CD8-positive, alpha-beta T cell (primary cell): ENCODE measurements at regions of chr6 and their contacts with region 1.

Region 1: GRCh38 chr6:11093589-11094410 is at the start of gene SMIM13:
- DNase-seq: peak; percentile 87 to 96 (median 95)
- ATAC-seq: peak; percentile 92
- H3K4me3 ChIP-seq: peak within 1 kb of the TSS; percentile 85 to 90
- H3K4me3 Mint-ChIP-seq: peak within 1 kb of the TSS; percentile 97
- H3K27ac ChIP-seq: peak within 1 kb of the TSS; percentile 81 to 92
- H3K27ac Mint-ChIP-seq: peak within 1 kb of the TSS; percentile 97
- H3K4me1 ChIP-seq: peaks cover 13% of the 10 kb centered on the region
- H3K4me1 Mint-ChIP-seq: peaks cover 30% of the 10 kb centered on the region
- H3K27me3 ChIP-seq: no peaks in the 10 kb centered on the region
- H3K27me3 Mint-ChIP-seq: no peaks in the 10 kb centered on the region
- CTCF ChIP-seq: peak; percentile 75
- total RNA-seq, gene SMIM13: 4.7 to 5.4 TPM

Region 2: DNA sequence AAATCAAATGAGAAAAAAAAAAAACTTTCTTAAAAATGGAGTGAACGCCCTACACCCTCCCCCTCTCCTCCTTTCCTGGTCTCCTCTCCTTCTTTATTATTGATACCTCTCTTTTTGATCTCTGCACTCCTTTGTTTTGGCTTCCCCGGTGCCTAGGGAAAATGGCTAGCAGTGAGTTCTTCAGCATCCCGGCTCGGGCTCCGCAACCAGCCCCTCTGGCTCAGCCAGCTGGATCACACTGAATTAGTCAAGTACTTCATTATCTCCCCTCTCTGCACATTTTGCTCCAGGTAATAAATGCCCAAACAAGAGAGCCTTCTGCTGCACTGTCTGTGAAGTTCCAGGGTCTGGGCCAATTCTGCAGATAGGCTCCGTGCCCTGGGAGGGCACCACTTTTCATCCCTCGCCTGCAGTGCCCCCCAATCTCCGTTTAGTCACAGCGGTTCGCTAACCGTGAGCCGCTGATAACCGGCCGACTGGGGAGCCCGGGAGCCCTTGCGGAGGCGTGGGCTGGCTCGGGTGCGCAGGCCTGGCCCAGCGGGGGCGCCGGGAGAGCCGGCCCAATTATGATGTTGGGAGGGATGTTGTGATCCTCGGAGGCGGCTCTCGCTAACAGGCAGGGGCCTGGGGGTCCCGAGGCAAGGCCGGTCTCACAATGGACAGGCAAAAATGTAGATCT is 980.8 kb before region 1 on chr6:
- CTCF ChIA-PET with region 1: no interaction called
- POLR2A ChIA-PET with region 1: no interaction called
- intact Hi-C with region 1: no loop called
- DNase-seq: no peak
- ATAC-seq: no peak
- H3K4me3 ChIP-seq: no peak overlapping the region
- H3K4me3 Mint-ChIP-seq: no peak overlapping the region
- H3K27ac ChIP-seq: no peak overlapping the region
- H3K27ac Mint-ChIP-seq: no peak overlapping the region
- H3K4me1 ChIP-seq: no peaks in the 10 kb centered on the region
- H3K4me1 Mint-ChIP-seq: no peaks in the 10 kb centered on the region
- H3K27me3 ChIP-seq: peaks cover 0 to 2% of the 10 kb centered on the region in 2 experiments
- H3K27me3 Mint-ChIP-seq: peaks cover 14% of the 10 kb centered on the region
- CTCF ChIP-seq: no peak

Region 3: DNA sequence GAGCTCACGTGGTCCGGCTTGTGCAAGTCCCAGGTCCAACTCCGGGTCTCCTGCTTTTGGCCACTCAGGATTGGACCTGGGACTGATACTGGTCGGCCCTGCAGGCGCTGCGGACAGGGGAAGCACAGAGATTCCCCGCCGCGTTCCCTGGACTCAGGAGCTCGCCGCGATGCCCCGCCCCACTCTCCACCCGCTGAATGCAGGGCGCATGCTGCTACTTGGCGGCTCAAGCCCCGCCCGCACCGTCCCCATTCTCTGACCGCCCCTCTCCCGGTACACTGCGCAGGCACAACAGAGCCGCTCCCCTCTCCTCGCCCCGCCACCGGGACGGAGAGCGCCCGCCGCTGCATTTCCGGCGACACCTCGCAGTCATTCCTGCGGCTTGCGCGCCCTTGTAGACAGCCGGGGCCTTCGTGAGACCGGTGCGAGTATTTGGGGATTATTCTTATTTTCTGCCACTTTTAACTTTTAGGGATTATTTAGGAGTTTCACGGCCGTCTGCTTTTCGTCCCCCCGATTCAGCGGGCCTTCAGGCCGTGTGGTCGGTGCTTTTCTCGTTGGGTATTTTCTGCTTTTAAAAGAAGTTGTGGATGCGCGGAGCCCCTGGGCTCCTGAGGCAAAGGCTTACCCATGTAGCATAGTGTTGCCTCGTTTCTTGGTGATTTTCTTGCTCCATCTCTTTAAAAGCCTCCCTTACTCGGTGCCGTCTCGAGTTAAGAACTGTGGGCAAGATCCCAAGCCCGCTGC is 370.8 kb before region 1 on chr6 and contains the start of gene TMEM14C:
- CTCF ChIA-PET with region 1: no interaction called
- POLR2A ChIA-PET with region 1: no interaction called
- intact Hi-C with region 1: loop called in 1 of 2 experiments (anchors 10 kb)
- DNase-seq: peak in 8 of 9 experiments; percentile 60 to 90 (median 82)
- ATAC-seq: peak; percentile 72
- H3K4me3 ChIP-seq: peak within 1 kb of the TSS; percentile 67 to 70
- H3K4me3 Mint-ChIP-seq: peak within 1 kb of the TSS; percentile 97
- H3K27ac ChIP-seq: peak within 1 kb of the TSS; percentile 49 to 65
- H3K27ac Mint-ChIP-seq: peak within 1 kb of the TSS; percentile 98
- H3K4me1 ChIP-seq: peaks cover 30% of the 10 kb centered on the region
- H3K4me1 Mint-ChIP-seq: peaks cover 64% of the 10 kb centered on the region
- H3K27me3 ChIP-seq: no peaks in the 10 kb centered on the region
- H3K27me3 Mint-ChIP-seq: no peaks in the 10 kb centered on the region
- CTCF ChIP-seq: no peak
- total RNA-seq, gene TMEM14C: 7.5 to 8.5 TPM

Region 4: DNA sequence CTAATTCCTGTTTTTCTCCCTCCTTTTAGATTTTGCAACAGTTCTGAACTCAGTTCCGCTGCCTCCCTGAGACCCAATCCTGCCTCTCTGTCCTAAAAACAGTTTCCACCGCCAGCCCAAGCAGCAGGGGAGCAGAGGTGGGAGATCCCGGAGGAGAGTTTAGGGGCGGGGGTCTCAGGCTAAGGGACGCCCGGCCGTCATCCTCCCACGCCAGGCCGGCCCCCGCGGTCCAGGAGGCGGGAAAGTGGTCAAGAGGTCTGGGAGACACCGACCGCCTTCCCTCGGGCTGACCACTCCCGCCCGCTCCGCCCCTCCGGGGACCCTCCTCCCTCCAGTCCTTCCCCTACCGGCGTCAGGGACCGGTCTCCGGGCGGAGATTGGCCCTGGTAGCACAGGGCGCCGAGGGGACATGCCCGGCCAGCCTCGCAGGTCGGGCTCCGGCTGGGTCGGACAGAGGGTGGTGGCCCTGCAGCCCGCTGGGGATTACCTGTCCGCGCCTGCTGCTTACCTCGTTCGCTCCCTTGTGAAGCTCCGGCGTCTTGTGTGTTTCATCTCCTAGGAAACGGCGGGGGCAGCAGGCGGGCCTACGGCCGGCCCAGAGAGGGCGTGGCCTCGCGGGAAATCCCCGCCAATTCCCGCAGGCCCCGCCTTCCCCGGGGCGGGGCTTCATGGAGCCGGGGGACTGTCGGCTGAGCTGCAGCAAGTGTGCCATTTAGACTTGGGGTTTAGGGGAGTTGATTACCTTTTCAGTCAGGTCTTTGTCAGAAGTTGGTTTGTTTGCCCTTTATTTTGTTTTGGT is 255.6 kb before region 1 on chr6 and contains the start of gene MAK:
- CTCF ChIA-PET with region 1: no interaction called
- POLR2A ChIA-PET with region 1: no interaction called
- intact Hi-C with region 1: loop called in 1 of 2 experiments (anchors 1 kb)
- DNase-seq: peak; percentile 74 to 94 (median 83)
- ATAC-seq: peak; percentile 96
- H3K4me3 ChIP-seq: peak within 1 kb of the TSS; percentile 53 to 56
- H3K4me3 Mint-ChIP-seq: peak within 1 kb of the TSS; percentile 73
- H3K27ac ChIP-seq: peak within 1 kb of the TSS in 1 of 2 experiments; percentile 30
- H3K27ac Mint-ChIP-seq: no peak within 1 kb of the TSS
- H3K4me1 ChIP-seq: peaks cover 22% of the 10 kb centered on the region
- H3K4me1 Mint-ChIP-seq: peaks cover 20% of the 10 kb centered on the region
- H3K27me3 ChIP-seq: peaks cover 11 to 25% of the 10 kb centered on the region in 2 experiments
- H3K27me3 Mint-ChIP-seq: peaks cover 55% of the 10 kb centered on the region
- CTCF ChIP-seq: no peak
- total RNA-seq, gene MAK: 0.62 to 0.89 TPM

Region 5: DNA sequence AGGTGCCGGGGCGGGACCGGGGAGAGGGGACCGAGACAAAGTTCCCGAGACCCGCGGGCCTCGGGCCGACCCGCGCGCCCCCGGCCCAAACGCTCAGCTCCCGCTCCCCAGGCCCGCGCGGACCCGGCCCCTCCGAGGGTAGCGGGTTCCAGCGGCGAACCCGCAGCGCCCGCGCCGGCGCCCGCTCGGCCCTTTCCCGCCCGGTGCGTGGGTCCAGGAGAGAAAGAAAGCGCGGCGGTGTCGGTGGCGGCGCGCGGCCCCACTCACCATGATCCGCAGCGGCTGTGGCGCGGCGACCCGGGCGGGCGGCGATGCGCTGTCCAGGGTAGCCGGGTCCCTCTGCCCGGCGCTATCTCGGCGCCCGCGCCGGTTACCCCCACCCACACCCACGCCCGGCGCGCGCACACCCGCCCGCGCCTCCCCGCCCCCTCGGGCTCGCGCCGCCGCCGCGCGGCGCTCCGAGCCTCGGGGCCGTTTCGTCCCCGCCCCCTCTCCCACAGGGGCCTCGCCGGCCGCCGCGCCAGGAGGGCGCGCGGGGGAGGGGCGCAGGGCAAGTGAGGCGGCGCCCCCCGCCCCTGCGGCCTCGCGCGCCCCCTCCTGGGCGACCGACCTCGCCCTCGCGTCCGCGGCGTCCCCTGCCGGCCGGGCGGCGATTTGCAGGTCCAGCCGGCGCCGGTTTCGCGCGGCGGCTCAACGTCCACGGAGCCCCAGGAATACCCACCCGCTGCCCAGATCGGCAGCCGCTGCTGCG is 49.7 kb before region 1 on chr6 and contains the start of gene ELOVL2:
- CTCF ChIA-PET with region 1: no interaction called
- POLR2A ChIA-PET with region 1: no interaction called
- intact Hi-C with region 1: no loop called
- DNase-seq: peak in 3 of 9 experiments; percentile 14 to 34 (median 31)
- ATAC-seq: peak; percentile 67
- H3K4me3 ChIP-seq: no peak within 1 kb of the TSS
- H3K4me3 Mint-ChIP-seq: peak within 1 kb of the TSS; percentile 79
- H3K27ac ChIP-seq: no peak within 1 kb of the TSS
- H3K27ac Mint-ChIP-seq: no peak within 1 kb of the TSS
- H3K4me1 ChIP-seq: peaks cover 7% of the 10 kb centered on the region
- H3K4me1 Mint-ChIP-seq: peaks cover 14% of the 10 kb centered on the region
- H3K27me3 ChIP-seq: peaks cover 19 to 23% of the 10 kb centered on the region in 2 experiments
- H3K27me3 Mint-ChIP-seq: peaks cover 60% of the 10 kb centered on the region
- CTCF ChIP-seq: peak; percentile 21
- total RNA-seq, gene ELOVL2: not detected

Region 6: DNA sequence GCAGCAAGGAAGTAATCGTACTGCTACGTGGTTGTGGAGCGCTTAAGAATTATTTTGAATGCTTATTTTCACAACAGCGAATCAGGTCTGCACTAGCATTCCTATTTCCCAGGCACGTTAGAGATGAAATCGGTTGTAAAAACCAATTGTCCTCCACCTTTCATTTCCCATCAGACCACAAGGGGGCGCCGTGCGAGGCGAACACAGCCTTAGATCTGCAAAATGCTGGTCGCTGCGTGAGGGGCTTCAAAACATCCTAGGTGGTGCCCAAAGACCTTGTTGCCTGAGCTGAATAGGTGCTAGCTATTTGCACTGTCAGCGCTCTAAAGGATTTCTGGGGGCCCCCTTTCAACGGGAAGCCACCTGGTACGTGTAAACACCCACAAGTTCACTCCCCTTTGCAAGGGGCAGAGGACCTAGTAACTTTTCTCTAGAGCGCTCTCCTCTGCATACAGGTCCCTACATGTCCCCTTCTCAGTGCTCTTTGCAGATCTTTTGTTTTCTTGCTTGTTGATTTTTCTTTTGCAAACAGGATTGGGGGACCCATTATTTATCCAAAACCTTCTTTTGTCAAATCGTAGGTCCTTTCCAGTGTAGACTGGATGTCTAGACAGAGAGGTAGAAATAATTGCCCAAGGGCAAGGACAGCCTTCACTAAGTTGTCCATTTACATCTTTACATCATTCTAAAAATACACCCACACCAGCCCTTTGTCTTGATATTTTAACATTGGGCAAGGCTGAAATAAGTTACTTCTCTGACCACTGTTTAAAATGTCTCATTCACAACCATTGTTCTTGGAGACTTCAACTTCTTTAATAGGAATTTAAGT is 78.9 kb after region 1 on chr6:
- CTCF ChIA-PET with region 1: interaction called, 3 read pairs
- POLR2A ChIA-PET with region 1: no interaction called
- intact Hi-C with region 1: loop called in 1 of 2 experiments (anchors 2 kb)
- DNase-seq: peak; percentile 58 to 90 (median 77)
- ATAC-seq: peak; percentile 79
- H3K4me3 ChIP-seq: peak overlapping the region in 1 of 2 experiments; percentile 23
- H3K4me3 Mint-ChIP-seq: peak overlapping the region; percentile 44
- H3K27ac ChIP-seq: no peak overlapping the region
- H3K27ac Mint-ChIP-seq: peak overlapping the region; percentile 62
- H3K4me1 ChIP-seq: peaks cover 9% of the 10 kb centered on the region
- H3K4me1 Mint-ChIP-seq: peaks cover 11% of the 10 kb centered on the region
- H3K27me3 ChIP-seq: no peaks in the 10 kb centered on the region
- H3K27me3 Mint-ChIP-seq: no peaks in the 10 kb centered on the region
- CTCF ChIP-seq: peak; percentile 86

Region 7: DNA sequence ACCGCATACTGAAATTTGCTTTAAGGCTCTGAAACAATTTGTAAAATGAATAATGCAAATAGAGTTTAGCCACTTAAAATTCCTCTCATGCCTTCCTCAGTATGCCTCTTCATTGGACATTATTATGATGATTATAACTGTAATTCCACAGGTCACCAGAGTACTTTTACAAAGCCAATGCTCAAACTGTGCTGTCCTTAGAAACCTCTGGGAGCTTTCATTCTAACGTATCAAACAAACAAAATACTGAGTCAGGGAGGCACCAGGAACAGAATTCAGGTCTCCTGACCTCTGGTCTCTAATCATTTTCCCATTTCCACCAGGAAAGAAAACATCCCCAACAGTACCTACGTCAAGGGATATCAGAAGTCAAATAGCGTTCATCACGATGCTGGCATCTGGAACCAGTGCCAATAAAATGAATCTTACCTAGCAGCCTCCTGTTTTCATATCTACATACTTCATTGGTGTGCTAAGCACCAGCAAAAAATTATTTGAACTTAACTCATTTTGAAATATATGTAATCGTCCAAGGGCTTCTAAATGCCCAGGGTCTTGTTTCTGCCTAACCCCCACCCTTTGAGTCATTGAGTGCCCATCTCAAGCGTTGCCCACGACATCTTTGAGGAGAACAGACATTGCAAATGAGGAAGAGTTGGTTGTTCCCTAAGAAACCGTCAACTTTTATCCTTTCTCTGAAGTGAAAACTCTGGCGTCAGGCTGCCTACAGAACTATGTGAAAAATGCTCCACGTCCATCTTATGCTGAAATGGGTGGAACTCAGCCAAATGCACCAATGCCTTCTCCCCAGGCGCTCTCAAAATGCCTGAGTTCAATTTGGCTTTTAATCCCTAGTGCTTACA is 100.8 kb after region 1 on chr6:
- CTCF ChIA-PET with region 1: no interaction called
- POLR2A ChIA-PET with region 1: no interaction called
- intact Hi-C with region 1: no loop called
- DNase-seq: no peak
- ATAC-seq: no peak
- H3K4me3 ChIP-seq: no peak overlapping the region
- H3K4me3 Mint-ChIP-seq: no peak overlapping the region
- H3K27ac ChIP-seq: no peak overlapping the region
- H3K27ac Mint-ChIP-seq: no peak overlapping the region
- H3K4me1 ChIP-seq: peaks cover 8% of the 10 kb centered on the region
- H3K4me1 Mint-ChIP-seq: peaks cover 26% of the 10 kb centered on the region
- H3K27me3 ChIP-seq: no peaks in the 10 kb centered on the region
- H3K27me3 Mint-ChIP-seq: no peaks in the 10 kb centered on the region
- CTCF ChIP-seq: no peak

Region 8: DNA sequence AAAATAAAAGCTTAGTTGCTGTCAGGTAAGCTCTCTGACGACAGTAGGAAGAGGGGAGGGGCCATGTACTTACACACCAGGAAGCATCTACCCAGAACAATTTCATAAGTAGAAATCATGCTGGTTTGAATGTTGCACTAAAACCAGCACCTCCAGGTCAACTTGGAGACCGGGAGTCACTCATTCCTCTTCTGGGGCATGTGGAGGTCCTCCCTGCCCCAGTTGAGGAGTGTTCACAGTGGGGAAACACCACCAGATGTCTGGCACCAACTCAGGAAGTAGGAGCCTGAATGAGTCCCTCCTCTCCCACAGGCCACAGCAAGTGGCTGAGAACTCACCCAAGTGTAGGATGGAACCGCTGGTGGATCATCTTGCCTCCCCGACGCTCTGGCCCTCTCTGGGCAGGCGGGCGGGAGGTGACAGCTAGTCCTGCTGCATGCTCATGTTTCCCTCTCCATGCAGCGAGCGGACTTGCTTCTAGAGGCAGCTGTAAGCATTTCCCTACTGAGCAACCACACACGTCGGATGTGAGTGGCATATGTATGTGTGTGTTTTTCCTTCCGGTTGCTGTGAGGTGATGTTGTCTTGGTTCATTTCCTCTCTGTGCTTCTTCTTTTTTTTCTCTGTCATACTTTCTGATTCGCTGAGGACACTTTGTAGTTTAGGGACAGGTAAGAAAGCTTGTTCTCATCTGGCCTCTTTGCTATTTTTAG is 288.2 kb after region 1 on chr6:
- CTCF ChIA-PET with region 1: no interaction called
- POLR2A ChIA-PET with region 1: no interaction called
- intact Hi-C with region 1: loop called in 1 of 2 experiments (anchors 5 kb)
- DNase-seq: peak; percentile 45 to 92 (median 67)
- ATAC-seq: peak; percentile 92
- H3K4me3 ChIP-seq: peak overlapping the region; percentile 66 to 67
- H3K4me3 Mint-ChIP-seq: peak overlapping the region; percentile 91
- H3K27ac ChIP-seq: peak overlapping the region; percentile 79 to 87
- H3K27ac Mint-ChIP-seq: peak overlapping the region; percentile 90
- H3K4me1 ChIP-seq: peaks cover 30% of the 10 kb centered on the region
- H3K4me1 Mint-ChIP-seq: peaks cover 62% of the 10 kb centered on the region
- H3K27me3 ChIP-seq: no peaks in the 10 kb centered on the region
- H3K27me3 Mint-ChIP-seq: no peaks in the 10 kb centered on the region
- CTCF ChIP-seq: no peak

Region 9: DNA sequence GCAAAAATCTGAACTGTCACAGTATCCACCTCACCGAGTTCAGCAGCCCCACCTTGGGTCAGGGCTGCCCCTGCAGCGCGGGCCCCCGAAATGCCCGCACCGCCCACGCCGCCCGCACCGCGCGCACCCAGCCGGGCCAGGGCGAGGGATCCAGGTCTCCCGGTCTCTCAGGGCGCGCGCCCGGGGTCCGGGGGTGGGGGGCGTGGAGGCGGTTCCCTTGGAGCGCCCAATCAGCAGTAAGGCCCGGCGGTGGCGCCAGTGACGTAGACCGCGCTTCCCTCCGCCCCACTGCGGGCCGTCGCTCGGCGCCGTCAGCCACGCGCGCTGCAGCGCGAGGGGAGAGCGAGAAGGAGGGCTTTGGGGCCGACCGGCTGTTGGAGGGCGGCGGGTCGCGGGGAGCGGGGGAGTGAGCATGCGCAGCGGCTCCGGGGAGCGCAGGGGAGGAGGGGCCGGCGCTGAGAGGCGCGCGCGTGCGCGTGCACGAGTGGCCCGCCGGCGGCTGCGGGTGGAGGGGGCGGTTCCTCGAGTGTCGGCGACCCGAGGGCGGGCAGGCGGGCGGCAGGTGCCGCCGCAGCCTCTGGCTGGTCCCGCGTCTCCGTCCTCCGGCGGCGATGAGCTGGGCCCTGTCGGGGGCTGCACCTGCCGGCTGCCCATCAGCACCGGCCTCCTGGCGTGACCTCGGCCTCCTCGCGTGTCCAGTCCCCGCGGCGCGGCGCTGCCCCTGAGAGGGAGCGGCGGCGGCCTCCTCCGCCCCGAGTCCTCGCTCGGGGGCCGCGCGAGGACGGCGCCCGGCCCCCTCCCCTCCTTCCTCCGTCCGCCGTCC is 443.6 kb after region 1 on chr6 and contains the start of gene TMEM170B:
- CTCF ChIA-PET with region 1: no interaction called
- POLR2A ChIA-PET with region 1: no interaction called
- intact Hi-C with region 1: loop called (anchors 1 to 2 kb)
- DNase-seq: peak; percentile 94 to 99 (median 97)
- ATAC-seq: peak; percentile 93
- H3K4me3 ChIP-seq: peak within 1 kb of the TSS; percentile 71 to 85
- H3K4me3 Mint-ChIP-seq: peak within 1 kb of the TSS; percentile 85
- H3K27ac ChIP-seq: peak within 1 kb of the TSS; percentile 36 to 60
- H3K27ac Mint-ChIP-seq: peak within 1 kb of the TSS; percentile 74
- H3K4me1 ChIP-seq: peaks cover 10% of the 10 kb centered on the region
- H3K4me1 Mint-ChIP-seq: peaks cover 18% of the 10 kb centered on the region
- H3K27me3 ChIP-seq: no peaks in the 10 kb centered on the region
- H3K27me3 Mint-ChIP-seq: peaks cover 7% of the 10 kb centered on the region
- CTCF ChIP-seq: no peak
- total RNA-seq, gene TMEM170B: 2.2 TPM